ENCODE measurements at regions of chr18 and their contacts with region 1.

Region 1: DNA sequence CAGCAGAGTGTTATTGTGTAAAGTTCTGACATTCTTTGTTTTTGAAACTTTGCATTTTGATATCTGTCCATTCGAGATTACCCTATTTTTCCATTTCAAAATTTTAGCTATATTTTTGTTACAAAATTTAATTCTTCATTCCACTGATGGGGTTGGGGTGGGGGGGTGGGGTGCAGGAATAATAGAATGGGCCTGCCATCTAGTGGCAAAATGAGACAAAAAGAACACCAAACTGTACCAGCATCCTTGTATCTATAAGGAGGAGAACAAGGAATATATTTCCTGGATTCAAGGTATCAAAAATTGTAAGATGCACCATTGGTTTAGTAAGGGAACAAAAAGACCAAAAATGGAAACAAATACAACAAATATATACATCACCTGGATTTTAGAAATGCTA is 27.9 kb upstream of the TTR start:
- DNase-seq: no peak
- ATAC-seq: 0 out of 6 replicates have a peak, but pooled peaks of 1 of the 2 experiments have one; percentile 51
- H3K4me3 ChIP-seq: no peak overlapping the region
- H3K27ac ChIP-seq: no peak overlapping the region
- H3K4me1 ChIP-seq: no peaks in the 10 kb centered on the region
- CTCF ChIP-seq: peak; percentile 49
- EP300 ChIP-seq: no peak
- POLR2A ChIP-seq: no peak
- RAD21 ChIP-seq: peak; percentile 12 to 57; a peak in 3 of 5 replicates

Region 2: GRCh38 chr18:31574359-31574758 is 10.6 kb after region 1 on chr18:
- CTCF ChIA-PET with region 1: interaction called, 15 read pairs
- POLR2A ChIA-PET with region 1: no interaction called
- DNase-seq: no peak
- ATAC-seq: no peak
- H3K4me3 ChIP-seq: no peak overlapping the region
- H3K27ac ChIP-seq: no peak overlapping the region
- H3K4me1 ChIP-seq: no peaks in the 10 kb centered on the region
- CTCF ChIP-seq: no peak
- EP300 ChIP-seq: no peak
- POLR2A ChIP-seq: no peak
- RAD21 ChIP-seq: no peak

Measured in A549 (cell line).